H1 (cell line): ENCODE measurements at regions of chr2 and their contacts with region 1.

Region 1: GRCh38 chr2:25309402-25309801 is 32.3 kb downstream of the DNMT3A start:
- DNase-seq: peak; percentile 69 to 85
- H3K4me3 ChIP-seq: no peak overlapping the region
- H3K27ac ChIP-seq: no peak overlapping the region
- H3K4me1 ChIP-seq: peaks cover 11 to 45% (median 38%) of the 10 kb centered on the region in 4 experiments
- H3K27me3 ChIP-seq: no peaks in the 10 kb centered on the region
- CTCF ChIP-seq: peak in 2 of 3 experiments; percentile 70 to 87; a peak in 3 of 4 replicates
- EP300 ChIP-seq: no peak
- POLR2A ChIP-seq: no peak
- RAD21 ChIP-seq: peak; percentile 77 to 81

Region 2: DNA sequence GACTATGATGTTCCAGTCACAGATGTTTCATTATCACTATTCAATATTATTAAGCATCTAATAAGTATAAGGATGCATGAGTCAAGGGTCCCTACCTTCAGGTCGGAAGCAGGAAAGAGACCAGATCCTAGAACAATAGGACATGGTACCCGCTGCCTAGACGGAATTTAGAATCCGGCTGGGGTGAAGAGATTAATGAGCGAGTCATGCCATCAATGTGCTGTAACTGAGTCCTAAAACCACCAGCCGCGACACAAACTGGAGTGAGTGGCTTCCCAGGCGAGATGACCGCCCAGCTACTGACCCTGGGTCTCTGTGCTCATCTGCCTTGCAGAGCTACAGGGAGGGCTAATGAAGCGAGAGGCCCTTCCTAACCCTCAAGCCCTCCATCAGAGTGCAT is 41.3 kb before region 1 on chr2:
- CTCF ChIA-PET with region 1: interaction called, 12 read pairs
- POLR2A ChIA-PET with region 1: no interaction called
- DNase-seq: no peak
- H3K4me3 ChIP-seq: no peak overlapping the region
- H3K27ac ChIP-seq: no peak overlapping the region
- H3K4me1 ChIP-seq: peaks cover 6 to 23% (median 13%) of the 10 kb centered on the region in 4 experiments
- H3K27me3 ChIP-seq: no peaks in the 10 kb centered on the region
- CTCF ChIP-seq: no peak
- EP300 ChIP-seq: no peak
- POLR2A ChIP-seq: no peak
- RAD21 ChIP-seq: no peak

Region 3: GRCh38 chr2:25286025-25286400 is 23.4 kb before region 1 on chr2:
- CTCF ChIA-PET with region 1: interaction called, 53 read pairs
- POLR2A ChIA-PET with region 1: interaction called, 8 read pairs
- DNase-seq: no peak
- H3K4me3 ChIP-seq: no peak overlapping the region
- H3K27ac ChIP-seq: no peak overlapping the region
- H3K4me1 ChIP-seq: peaks cover 0 to 11% (median 6%) of the 10 kb centered on the region in 4 experiments; a peak in 2 of 7 replicates
- H3K27me3 ChIP-seq: no peaks in the 10 kb centered on the region
- CTCF ChIP-seq: no peak
- EP300 ChIP-seq: no peak
- POLR2A ChIP-seq: no peak
- RAD21 ChIP-seq: no peak

Region 4: GRCh38 chr2:25323042-25323514 is 13.7 kb after region 1 on chr2:
- CTCF ChIA-PET with region 1: interaction called, 26 read pairs
- POLR2A ChIA-PET with region 1: interaction called, 6 read pairs
- DNase-seq: peak; percentile 39 to 85
- H3K4me3 ChIP-seq: no peak overlapping the region
- H3K27ac ChIP-seq: no peak overlapping the region
- H3K4me1 ChIP-seq: peaks cover 3 to 6% (median 4%) of the 10 kb centered on the region in 4 experiments; a peak in 6 of 7 replicates
- H3K27me3 ChIP-seq: no peaks in the 10 kb centered on the region; a peak in 1 of 7 replicates
- CTCF ChIP-seq: no peak
- EP300 ChIP-seq: no peak
- POLR2A ChIP-seq: no peak
- RAD21 ChIP-seq: no peak

Region 5: GRCh38 chr2:25342372-25343186 is 33.2 kb after region 1 on chr2:
- CTCF ChIA-PET with region 1: interaction called, 178 read pairs
- POLR2A ChIA-PET with region 1: interaction called, 9 read pairs
- DNase-seq: peak; percentile 77 to 93
- H3K4me3 ChIP-seq: peak overlapping the region; percentile 37 to 64 (median 48); a peak in 7 of 8 replicates
- H3K27ac ChIP-seq: no peak overlapping the region
- H3K4me1 ChIP-seq: peaks cover 0 to 20% (median 10%) of the 10 kb centered on the region in 4 experiments; a peak in 5 of 7 replicates
- H3K27me3 ChIP-seq: peaks cover 0 to 18% (median 11%) of the 10 kb centered on the region in 4 experiments; a peak in 6 of 7 replicates
- CTCF ChIP-seq: peak in 2 of 3 experiments; percentile 95 to 96; a peak in 3 of 4 replicates
- EP300 ChIP-seq: peak in 1 of 2 experiments; percentile 15; a peak in 2 of 3 replicates
- POLR2A ChIP-seq: no peak
- RAD21 ChIP-seq: peak; percentile 80 to 86

Region 6: GRCh38 chr2:25376750-25377621 is 67.6 kb after region 1 on chr2:
- CTCF ChIA-PET with region 1: interaction called, 20 read pairs
- POLR2A ChIA-PET with region 1: no interaction called
- DNase-seq: peak; percentile 72 to 97
- H3K4me3 ChIP-seq: peak overlapping the region in 3 of 4 experiments; percentile 9 to 48 (median 16); a peak in 4 of 8 replicates
- H3K27ac ChIP-seq: peak overlapping the region; percentile 3; the same call in 1 of the 2 replicates
- H3K4me1 ChIP-seq: peaks cover 0 to 14% (median 13%) of the 10 kb centered on the region in 4 experiments; a peak in 5 of 7 replicates
- H3K27me3 ChIP-seq: peaks cover 0 to 8% (median 0%) of the 10 kb centered on the region in 4 experiments; a peak in 5 of 7 replicates
- CTCF ChIP-seq: peak in 2 of 3 experiments; percentile 95 to 98; a peak in 3 of 4 replicates
- EP300 ChIP-seq: peak in 1 of 2 experiments; percentile 30; a peak in 1 of 3 replicates
- POLR2A ChIP-seq: 0 out of 3 replicates have a peak, but pooled peaks of 1 of the 2 experiments have one; percentile 13
- RAD21 ChIP-seq: peak; percentile 58 to 74